Ovary (tissue), 10 donors: ENCODE measurements at regions of chr12 and their contacts with region 1.

Region 1: GRCh38 chr12:114692558-114693480 is 8.8 kb upstream of the TBX3 start:
- DNase-seq: peak in 3 of 5 donors; percentile 42 to 58 (median 51)
- H3K4me3 ChIP-seq: peak overlapping the region; percentile 39
- H3K27ac ChIP-seq: no peak overlapping the region
- H3K4me1 ChIP-seq: no peaks in the 10 kb centered on the region
- H3K27me3 ChIP-seq: no peaks in the 10 kb centered on the region
- CTCF ChIP-seq: no peak
- EP300 ChIP-seq: no peak
- POLR2A ChIP-seq: no peak

Region 2: GRCh38 chr12:114625294-114625851 is 67.4 kb before region 1 on chr12:
- intact Hi-C with region 1: no loop called
- DNase-seq: peak in 2 of 5 donors; percentile 32 to 38
- H3K4me3 ChIP-seq: no peak overlapping the region
- H3K27ac ChIP-seq: no peak overlapping the region
- H3K4me1 ChIP-seq: no peaks in the 10 kb centered on the region
- H3K27me3 ChIP-seq: no peaks in the 10 kb centered on the region
- CTCF ChIP-seq: no peak
- EP300 ChIP-seq: no peak
- POLR2A ChIP-seq: no peak

Region 3: GRCh38 chr12:114799574-114800487 is 107.0 kb after region 1 on chr12:
- intact Hi-C with region 1: loop called in 1 of 4 experiments (anchors 10 kb)
- DNase-seq: peak; percentile 42 to 87 (median 85)
- H3K4me3 ChIP-seq: no peak overlapping the region
- H3K27ac ChIP-seq: peak overlapping the region in 1 of 2 donors; percentile 20
- H3K4me1 ChIP-seq: peaks cover 7% of the 10 kb centered on the region
- H3K27me3 ChIP-seq: no peaks in the 10 kb centered on the region
- CTCF ChIP-seq: no peak
- EP300 ChIP-seq: no peak
- POLR2A ChIP-seq: no peak